Head of caudate nucleus (tissue), 42 donors: ENCODE measurements at regions of chr1 and their contacts with region 1.

Region 1: GRCh38 chr1:153679337-153680119 is 1.0 kb downstream of the NPR1 start:
- DNase-seq: peak in 1 of 42 donors; percentile 31

Region 2: DNA sequence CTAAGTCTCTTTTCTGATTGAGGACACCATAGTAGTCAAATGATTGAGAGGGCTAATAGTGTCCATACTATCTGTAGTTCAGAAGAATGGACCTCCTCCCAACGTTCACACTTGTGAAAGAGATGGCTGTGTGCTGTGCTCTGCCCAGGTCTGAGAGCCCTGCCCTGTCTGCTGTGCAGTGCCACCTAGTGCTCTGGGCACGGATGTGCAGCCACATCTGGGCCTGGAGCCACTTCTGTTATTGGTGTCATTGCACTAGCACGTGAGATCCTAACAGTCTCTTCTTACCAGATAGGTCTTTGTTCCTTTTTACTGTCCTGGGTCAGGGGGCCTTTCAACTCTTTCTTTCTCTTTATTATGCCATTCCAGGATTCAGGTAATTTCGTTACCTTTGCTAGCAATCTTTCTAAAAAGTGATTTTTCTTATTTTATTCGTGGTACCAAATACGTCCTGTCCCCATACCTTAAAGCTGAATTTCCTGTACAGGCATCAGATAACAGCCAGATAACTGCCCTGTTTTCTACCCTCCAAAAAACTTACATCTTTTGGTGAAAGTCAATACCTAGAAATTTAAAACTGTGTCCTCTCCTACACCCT is 70.0 kb after region 1 on chr1:
- intact Hi-C with region 1: loop called (anchors 10 kb)
- DNase-seq: peak; percentile 64 to 92 (median 83)